ENCODE measurements at regions of chr6 and their contacts with region 1.

Region 1: DNA sequence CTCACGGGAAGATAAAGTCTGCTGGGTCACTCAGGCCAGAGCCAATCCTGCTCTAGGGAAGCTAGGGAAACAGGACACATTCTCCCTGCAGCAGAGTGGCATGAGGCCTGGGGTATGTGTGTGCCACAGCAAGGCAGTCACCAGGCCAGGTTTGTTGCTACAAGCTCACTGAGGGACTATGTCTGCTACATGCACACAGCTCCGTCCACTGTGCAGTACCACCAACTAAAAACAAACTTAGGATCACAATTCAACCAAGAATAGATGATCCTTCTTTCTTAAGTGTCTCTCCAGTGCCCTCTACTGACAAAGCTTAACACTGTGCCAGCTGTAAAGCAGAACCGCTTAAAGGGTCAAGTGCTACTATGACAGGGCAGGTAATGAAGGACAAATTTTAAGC is 192.5 kb downstream of the PTPRK start:
- DNase-seq: peak in 1 of 4 experiments; percentile 7
- ATAC-seq: no peak
- H3K4me3 ChIP-seq: no peak overlapping the region
- H3K27ac ChIP-seq: no peak overlapping the region
- H3K4me1 ChIP-seq: no peaks in the 10 kb centered on the region
- H3K27me3 ChIP-seq: no peaks in the 10 kb centered on the region
- CTCF ChIP-seq: peak; percentile 3 to 25 (median 20); a peak in 1 of 6 replicates
- EP300 ChIP-seq: no peak
- POLR2A ChIP-seq: no peak
- RAD21 ChIP-seq: peak in 1 of 2 experiments; percentile 40; a peak in 1 of 4 replicates

Region 2: DNA sequence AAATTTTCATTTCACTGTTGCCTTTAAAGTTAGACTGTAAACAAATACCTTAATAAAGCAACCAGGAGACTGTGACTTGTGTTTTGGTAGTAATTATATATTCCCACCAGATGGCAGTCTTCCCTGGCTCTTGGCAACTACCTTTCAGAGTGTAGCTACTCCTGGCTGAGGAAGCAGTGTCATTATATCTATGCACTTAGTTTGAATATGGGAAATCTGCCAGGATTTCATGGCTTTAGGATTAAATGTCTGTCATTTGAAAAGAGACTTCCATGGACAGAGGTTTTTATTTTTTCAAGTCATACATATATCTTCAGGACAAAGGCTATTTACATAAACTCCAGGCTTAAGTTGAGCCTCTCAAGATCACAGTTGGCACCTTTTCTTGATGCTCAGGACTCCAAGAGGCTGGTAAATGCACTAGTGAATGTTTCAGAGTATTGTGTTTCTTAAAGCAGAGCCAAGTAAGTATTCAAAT is 590.8 kb before region 1 on chr6:
- CTCF ChIA-PET with region 1: no interaction called
- POLR2A ChIA-PET with region 1: no interaction called
- in situ Hi-C with region 1: no loop called
- intact Hi-C with region 1: loop called (anchors 10 kb)
- DNase-seq: peak; percentile 12 to 41 (median 33)
- ATAC-seq: peak; percentile 61; the same call in 1 of the 3 replicates
- H3K4me3 ChIP-seq: no peak overlapping the region
- H3K27ac ChIP-seq: no peak overlapping the region
- H3K4me1 ChIP-seq: no peaks in the 10 kb centered on the region
- H3K27me3 ChIP-seq: no peaks in the 10 kb centered on the region
- CTCF ChIP-seq: peak in 2 of 3 experiments; percentile 36 to 52; a peak in 3 of 6 replicates
- EP300 ChIP-seq: no peak
- POLR2A ChIP-seq: no peak
- RAD21 ChIP-seq: peak; percentile 56 to 71

Region 3: GRCh38 chr6:128259730-128260685 is 67.9 kb before region 1 on chr6:
- CTCF ChIA-PET with region 1: no interaction called
- POLR2A ChIA-PET with region 1: no interaction called
- in situ Hi-C with region 1: no loop called
- intact Hi-C with region 1: no loop called
- DNase-seq: no peak
- ATAC-seq: no peak
- H3K4me3 ChIP-seq: no peak overlapping the region
- H3K27ac ChIP-seq: no peak overlapping the region
- H3K4me1 ChIP-seq: no peaks in the 10 kb centered on the region
- H3K27me3 ChIP-seq: no peaks in the 10 kb centered on the region
- CTCF ChIP-seq: no peak
- EP300 ChIP-seq: no peak
- POLR2A ChIP-seq: no peak
- RAD21 ChIP-seq: no peak

Region 4: DNA sequence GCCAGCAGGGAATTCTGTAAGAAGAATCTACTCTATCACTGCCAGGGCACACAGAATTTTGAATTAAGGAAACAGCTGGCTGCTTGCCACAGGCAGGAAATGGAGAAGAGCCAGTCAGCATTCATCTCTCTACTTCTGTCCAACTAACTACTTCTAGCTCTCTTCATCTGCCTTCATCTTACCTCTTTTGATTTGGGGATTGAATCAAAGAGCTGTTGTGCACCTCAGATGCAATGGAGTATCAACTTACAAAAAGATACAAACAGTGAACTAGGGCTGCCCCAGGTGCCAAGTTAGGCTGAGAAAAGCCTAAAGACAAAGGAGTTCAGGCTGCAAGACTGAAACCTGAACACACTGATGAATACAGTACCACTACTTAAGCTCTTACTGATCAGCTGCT is 110.5 kb after region 1 on chr6:
- CTCF ChIA-PET with region 1: no interaction called
- POLR2A ChIA-PET with region 1: no interaction called
- in situ Hi-C with region 1: no loop called
- intact Hi-C with region 1: no loop called
- DNase-seq: no peak
- ATAC-seq: no peak
- H3K4me3 ChIP-seq: no peak overlapping the region
- H3K27ac ChIP-seq: no peak overlapping the region
- H3K4me1 ChIP-seq: no peaks in the 10 kb centered on the region
- H3K27me3 ChIP-seq: no peaks in the 10 kb centered on the region
- CTCF ChIP-seq: no peak
- EP300 ChIP-seq: no peak
- POLR2A ChIP-seq: no peak
- RAD21 ChIP-seq: no peak

Measured in K562 (cell line).